Left cardiac atrium (tissue), 4 donors: ENCODE measurements at regions of chr18 and their contacts with region 1.

Region 1: GRCh38 chr18:44882163-44882868 is 201.6 kb downstream of the SETBP1 start:
- DNase-seq: peak; percentile 36
- ATAC-seq: peak; percentile 92 to 94

Region 2: GRCh38 chr18:44679056-44679905 is 203.0 kb before region 1 on chr18:
- intact Hi-C with region 1: loop called in 1 of 2 experiments (anchors 5 kb)
- DNase-seq: peak; percentile 91
- ATAC-seq: peak; percentile 97

Region 3: DNA sequence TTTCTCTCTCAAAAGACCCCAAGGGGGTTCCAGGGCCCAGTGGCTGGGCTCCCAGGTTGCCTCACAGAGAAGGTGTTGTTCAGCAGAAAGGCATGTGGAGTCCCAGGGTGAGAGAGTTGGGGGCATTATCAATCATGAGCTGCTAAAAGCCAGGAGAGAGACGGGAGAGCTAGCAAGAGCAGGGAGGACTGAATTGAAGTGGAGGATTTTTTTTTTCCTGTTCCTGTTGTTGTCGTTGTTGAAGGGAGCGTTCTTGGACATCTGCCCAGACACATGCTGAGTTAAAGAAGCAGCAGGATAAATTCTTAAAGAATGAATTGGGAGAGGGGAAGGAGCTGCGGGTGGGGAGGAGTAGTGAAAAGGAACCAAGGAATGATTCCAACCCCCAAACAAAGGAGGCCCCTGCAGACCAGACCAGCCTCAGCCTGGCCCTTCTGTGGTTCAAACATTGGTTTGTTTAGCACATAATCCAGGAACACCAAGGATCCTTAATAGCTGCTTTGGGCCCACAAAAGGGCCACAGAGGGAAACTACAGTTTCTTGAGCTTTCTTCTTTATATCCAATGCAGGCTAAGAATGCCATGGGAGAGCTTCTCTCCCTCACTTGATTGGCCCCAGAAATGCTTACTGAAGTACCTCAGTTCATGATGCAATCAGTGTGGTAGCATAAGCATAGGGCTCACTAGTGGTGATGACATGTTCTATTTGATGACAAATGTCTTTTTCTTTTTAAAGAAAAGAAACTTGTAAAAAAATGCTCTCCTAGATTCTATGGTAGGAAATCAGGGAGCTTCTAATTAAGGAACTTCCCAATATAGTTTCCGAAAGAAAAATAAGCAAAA is 55.7 kb before region 1 on chr18:
- intact Hi-C with region 1: no loop called
- DNase-seq: peak; percentile 79
- ATAC-seq: peak; percentile 59 to 75

Region 4: GRCh38 chr18:44996261-44996660 is 113.9 kb after region 1 on chr18:
- intact Hi-C with region 1: no loop called
- DNase-seq: no peak
- ATAC-seq: no peak